A549 (cell line): ENCODE measurements at regions of chr15 and their contacts with region 1.

Region 1: GRCh38 chr15:39580117-39580484 is 778 bp upstream of the THBS1 start:
- DNase-seq: peak; percentile 54 to 86
- ATAC-seq: peak; percentile 76 to 81
- H3K4me3 ChIP-seq: peak overlapping the region; percentile 95
- H3K27ac ChIP-seq: peak overlapping the region; percentile 87 to 99
- H3K4me1 ChIP-seq: peaks cover 37% of the 10 kb centered on the region
- CTCF ChIP-seq: peak; percentile 82
- EP300 ChIP-seq: no peak
- POLR2A ChIP-seq: no peak
- RAD21 ChIP-seq: peak; percentile 80 to 94

Region 2: DNA sequence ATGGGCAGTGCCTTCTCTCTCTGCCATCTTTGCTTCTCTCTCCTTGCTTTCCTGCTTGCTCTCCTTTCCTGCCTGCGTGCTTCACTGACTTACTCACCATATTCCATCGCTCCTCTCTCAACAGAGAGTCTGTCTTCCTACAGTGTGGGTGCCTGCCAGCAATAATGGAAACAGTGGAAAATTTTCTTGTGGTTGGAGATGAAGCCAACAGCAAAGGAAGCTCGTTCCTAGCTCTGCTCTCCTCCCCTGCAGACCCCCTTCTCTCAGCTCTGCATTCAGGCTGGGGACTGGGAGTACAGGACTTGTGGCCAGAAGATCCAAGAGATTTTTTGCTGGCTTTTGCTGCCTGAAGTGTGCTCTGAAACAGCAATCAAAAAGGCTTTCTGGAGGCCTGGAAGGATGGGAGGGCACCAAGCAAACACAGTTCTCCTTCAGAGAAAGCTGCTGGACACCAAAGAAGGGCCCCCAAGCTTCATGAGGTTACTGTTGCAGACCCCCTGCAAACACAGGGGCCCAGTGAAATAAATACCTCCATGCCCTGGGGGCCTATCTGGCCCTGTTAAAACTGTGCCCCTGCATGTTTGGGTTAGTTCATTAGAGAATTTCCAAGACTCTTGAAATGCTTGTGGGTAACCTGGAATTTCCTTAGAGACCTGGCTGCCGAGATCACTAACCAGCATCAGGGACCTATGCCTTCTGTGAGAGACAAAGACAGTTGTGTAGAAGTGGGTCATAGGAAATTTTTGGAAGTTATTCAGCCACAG is 865.6 kb before region 1 on chr15:
- CTCF ChIA-PET with region 1: interaction called, 10 read pairs
- POLR2A ChIA-PET with region 1: no interaction called
- DNase-seq: no peak
- ATAC-seq: no peak
- H3K4me3 ChIP-seq: no peak overlapping the region
- H3K27ac ChIP-seq: peak overlapping the region in 1 of 2 experiments; percentile 26; a peak in 1 of 6 replicates
- H3K4me1 ChIP-seq: 0 out of 3 replicates have a peak, but pooled peaks cover 2% of the 10 kb centered on the region
- CTCF ChIP-seq: no peak
- EP300 ChIP-seq: no peak
- POLR2A ChIP-seq: no peak
- RAD21 ChIP-seq: no peak

Region 3: GRCh38 chr15:39171944-39172368 is 408.1 kb before region 1 on chr15:
- CTCF ChIA-PET with region 1: interaction called, 79 read pairs
- POLR2A ChIA-PET with region 1: interaction called, 31 read pairs
- DNase-seq: peak; percentile 74 to 93
- ATAC-seq: peak; percentile 99 to 100
- H3K4me3 ChIP-seq: no peak overlapping the region
- H3K27ac ChIP-seq: peak overlapping the region; percentile 69 to 80
- H3K4me1 ChIP-seq: peaks cover 17% of the 10 kb centered on the region
- CTCF ChIP-seq: peak; percentile 66
- EP300 ChIP-seq: no peak
- POLR2A ChIP-seq: no peak
- RAD21 ChIP-seq: peak; percentile 94 to 97

Region 4: GRCh38 chr15:39188925-39189324 is 391.2 kb before region 1 on chr15:
- CTCF ChIA-PET with region 1: interaction called, 19 read pairs
- POLR2A ChIA-PET with region 1: interaction called, 4 read pairs
- DNase-seq: peak; percentile 36 to 80
- ATAC-seq: peak; percentile 82 to 90
- H3K4me3 ChIP-seq: no peak overlapping the region
- H3K27ac ChIP-seq: peak overlapping the region; percentile 78 to 82
- H3K4me1 ChIP-seq: peaks cover 44% of the 10 kb centered on the region
- CTCF ChIP-seq: no peak
- EP300 ChIP-seq: peak; percentile 32 to 72; a peak in 2 of 5 replicates
- POLR2A ChIP-seq: no peak
- RAD21 ChIP-seq: peak; percentile 2 to 44; a peak in 2 of 5 replicates

Region 5: DNA sequence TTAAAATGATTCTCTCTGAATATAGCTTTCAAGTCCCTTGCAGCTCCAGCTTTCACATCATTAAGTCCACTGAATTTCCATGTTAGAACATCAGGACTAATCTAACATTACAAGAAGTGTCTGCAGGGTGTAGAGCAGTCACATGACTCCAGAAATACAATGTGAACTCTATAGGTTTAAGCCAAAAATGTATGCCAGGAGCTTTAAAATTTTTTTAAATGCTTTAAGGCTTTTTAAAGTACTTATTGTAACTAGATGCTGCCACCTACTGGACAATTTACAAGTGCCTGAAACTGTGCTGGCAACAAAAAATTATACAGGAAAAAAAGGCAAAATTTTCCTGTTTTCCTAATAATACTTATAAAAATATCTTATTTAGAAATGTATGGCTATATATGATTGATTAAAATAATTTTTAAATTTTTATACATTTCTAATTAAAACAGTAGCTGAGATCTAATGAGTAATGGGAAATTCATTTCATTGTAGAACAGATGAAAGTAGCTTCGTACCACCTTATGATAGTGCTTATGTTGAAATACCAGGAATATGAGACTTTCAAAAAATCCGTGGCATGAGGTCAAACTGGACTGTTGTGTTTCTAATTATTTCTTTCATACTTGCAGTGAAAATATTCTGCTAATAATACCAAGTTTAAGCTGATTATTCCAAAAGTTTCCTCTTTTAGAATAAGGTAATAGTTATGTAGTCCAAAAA is 176.9 kb after region 1 on chr15:
- CTCF ChIA-PET with region 1: interaction called, 32 read pairs
- POLR2A ChIA-PET with region 1: interaction called, 11 read pairs
- DNase-seq: peak in 1 of 2 experiments; percentile 65
- ATAC-seq: no peak
- H3K4me3 ChIP-seq: no peak overlapping the region
- H3K27ac ChIP-seq: peak overlapping the region in 1 of 2 experiments; percentile 45; a peak in 1 of 6 replicates
- H3K4me1 ChIP-seq: no peaks in the 10 kb centered on the region
- CTCF ChIP-seq: peak; percentile 83
- EP300 ChIP-seq: no peak
- POLR2A ChIP-seq: no peak
- RAD21 ChIP-seq: peak; percentile 75 to 89